ENCODE measurements at regions of chr5 and their contacts with region 1.

Region 1: DNA sequence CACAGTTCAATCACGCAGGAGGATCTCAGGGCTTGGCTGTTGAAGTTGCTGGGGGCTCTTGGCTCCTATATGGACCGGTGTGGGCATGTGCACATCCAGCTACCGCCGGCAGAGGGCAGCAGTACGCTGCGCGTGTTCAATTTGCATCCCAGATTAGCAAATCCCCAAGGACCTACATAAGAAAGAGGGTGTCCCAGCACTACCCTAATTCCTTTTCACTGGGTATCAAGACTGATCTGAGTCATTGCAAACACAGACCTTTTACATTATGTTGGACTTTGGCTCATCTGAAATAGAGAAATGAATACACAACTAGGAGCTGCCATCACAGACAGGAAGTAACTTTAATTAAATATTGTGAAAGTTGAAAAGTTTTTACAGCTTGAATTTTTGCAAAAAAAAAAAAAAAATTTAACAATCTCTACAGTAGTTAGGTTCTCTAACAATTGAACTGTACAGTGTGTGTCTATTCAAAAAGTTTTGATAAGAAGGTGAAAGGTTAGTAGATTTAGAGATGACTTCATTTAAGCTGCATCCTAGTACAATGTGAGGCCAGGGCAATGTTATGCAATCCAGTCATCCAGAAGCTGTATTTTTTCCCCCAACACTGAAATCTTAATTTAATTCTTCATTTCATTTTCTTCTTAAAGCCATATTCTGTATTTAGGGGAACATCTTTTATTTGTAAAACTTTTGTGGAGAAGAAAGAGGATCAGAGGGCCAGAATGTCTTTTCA is 404.0 kb downstream of the EBF1 start:
- DNase-seq: peak; percentile 70
- ATAC-seq: peak; percentile 85
- H3K4me3 ChIP-seq: no peak overlapping the region
- H3K27ac ChIP-seq: no peak overlapping the region
- H3K4me1 ChIP-seq: no peaks in the 10 kb centered on the region
- H3K27me3 ChIP-seq: no peaks in the 10 kb centered on the region; the same call in 1 of the 2 replicates
- CTCF ChIP-seq: peak; percentile 90

Region 2: DNA sequence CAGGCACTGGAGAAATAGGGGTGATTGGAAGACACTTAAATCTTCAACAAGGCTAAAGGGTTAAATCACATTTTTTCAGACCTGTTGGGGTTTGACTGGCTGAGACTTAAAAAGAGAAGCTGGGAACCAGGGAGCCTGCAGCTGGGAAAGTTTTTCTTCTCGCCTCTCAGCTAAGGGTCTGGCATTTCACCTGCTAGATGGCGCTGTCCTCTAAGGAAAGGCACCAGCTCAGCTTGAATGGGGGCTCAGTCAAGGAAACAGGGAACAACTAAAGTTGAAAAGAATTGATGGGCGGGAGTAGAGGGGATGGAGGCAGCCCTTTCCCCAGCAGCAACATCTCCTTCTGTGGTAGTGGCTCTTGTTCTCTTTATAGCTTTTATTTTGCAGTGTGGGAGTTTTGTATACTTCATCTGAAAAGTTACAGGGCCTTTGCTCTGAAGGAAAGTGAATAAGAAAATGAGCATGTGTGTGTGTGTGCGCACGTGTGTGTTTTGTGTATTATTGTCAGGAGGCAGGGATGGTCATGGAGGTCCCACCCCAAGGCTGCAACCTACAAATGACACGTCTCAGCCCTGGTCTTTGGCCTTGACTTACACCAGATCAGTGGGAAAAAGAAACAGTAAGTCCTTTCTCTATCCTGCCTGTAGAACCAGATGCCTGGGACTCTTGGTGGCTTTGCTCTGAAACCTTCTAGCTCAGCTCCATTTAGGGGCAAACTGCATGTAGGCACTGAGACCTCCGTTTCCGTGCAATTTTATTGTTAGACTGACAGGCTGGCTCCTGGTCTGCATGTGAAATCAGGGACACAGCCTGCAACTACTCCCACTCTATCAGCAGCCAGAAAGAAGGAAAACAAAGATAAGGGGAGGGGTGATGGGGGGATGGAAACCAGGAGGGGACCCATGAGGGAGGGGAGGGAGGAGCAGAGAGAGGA is 520.6 kb before region 1 on chr5:
- CTCF ChIA-PET with region 1: no interaction called
- POLR2A ChIA-PET with region 1: no interaction called
- intact Hi-C with region 1: loop called (anchors 2 kb)
- DNase-seq: peak; percentile 90
- ATAC-seq: peak; percentile 71
- H3K4me3 ChIP-seq: no peak overlapping the region
- H3K27ac ChIP-seq: no peak overlapping the region
- H3K4me1 ChIP-seq: peaks cover 15% of the 10 kb centered on the region
- H3K27me3 ChIP-seq: peaks cover 50% of the 10 kb centered on the region
- CTCF ChIP-seq: peak; percentile 99

Region 3: GRCh38 chr5:158852622-158853021 is 156.9 kb after region 1 on chr5:
- CTCF ChIA-PET with region 1: no interaction called
- POLR2A ChIA-PET with region 1: no interaction called
- intact Hi-C with region 1: loop called (anchors 10 kb)
- DNase-seq: no peak
- ATAC-seq: no peak
- H3K4me3 ChIP-seq: no peak overlapping the region
- H3K27ac ChIP-seq: no peak overlapping the region
- H3K4me1 ChIP-seq: peaks cover 28% of the 10 kb centered on the region
- H3K27me3 ChIP-seq: no peaks in the 10 kb centered on the region
- CTCF ChIP-seq: no peak

Region 4: GRCh38 chr5:159049844-159050315 is 354.1 kb after region 1 on chr5:
- CTCF ChIA-PET with region 1: interaction called, 3 read pairs
- POLR2A ChIA-PET with region 1: no interaction called
- intact Hi-C with region 1: loop called (anchors 5 kb)
- DNase-seq: peak; percentile 33
- ATAC-seq: peak; percentile 62
- H3K4me3 ChIP-seq: no peak overlapping the region
- H3K27ac ChIP-seq: no peak overlapping the region
- H3K4me1 ChIP-seq: no peaks in the 10 kb centered on the region
- H3K27me3 ChIP-seq: no peaks in the 10 kb centered on the region
- CTCF ChIP-seq: peak; percentile 49

Region 5: GRCh38 chr5:159133041-159133741 is 437.4 kb after region 1 on chr5:
- CTCF ChIA-PET with region 1: no interaction called
- POLR2A ChIA-PET with region 1: no interaction called
- intact Hi-C with region 1: loop called (anchors 1 kb)
- DNase-seq: peak; percentile 79
- ATAC-seq: peak; percentile 78
- H3K4me3 ChIP-seq: peak overlapping the region; percentile 48
- H3K27ac ChIP-seq: peak overlapping the region; percentile 45
- H3K4me1 ChIP-seq: peaks cover 22% of the 10 kb centered on the region
- H3K27me3 ChIP-seq: peaks cover 2% of the 10 kb centered on the region; the same call in 1 of the 2 replicates
- CTCF ChIP-seq: peak; percentile 77

Measured in PC-3 (cell line).